CD14-positive monocyte (primary cell): ENCODE measurements at regions of chr19 and their contacts with region 1.

Region 1: GRCh38 chr19:19900729-19901444 is at the start of gene ZNF93:
- DNase-seq: peak; percentile 85 to 87 (median 86)
- H3K4me3 ChIP-seq: peak within 1 kb of the TSS; percentile 68 to 94 (median 88)
- H3K4me3 Mint-ChIP-seq: peak within 1 kb of the TSS; percentile 98 to 99
- H3K27ac ChIP-seq: peak within 1 kb of the TSS; percentile 82 to 86
- H3K27ac Mint-ChIP-seq: peak within 1 kb of the TSS; percentile 80 to 93 (median 90)
- H3K4me1 ChIP-seq: peaks cover 12 to 18% of the 10 kb centered on the region in 2 donors
- H3K4me1 Mint-ChIP-seq: peaks cover 12% of the 10 kb centered on the region
- H3K27me3 ChIP-seq: no peaks in the 10 kb centered on the region
- H3K27me3 Mint-ChIP-seq: peaks cover 0 to 2% (median 0%) of the 10 kb centered on the region in 3 donors
- CTCF ChIP-seq: no peak
- polyA plus RNA-seq, gene ZNF93: 2.4 to 4.6 (median 2.8) TPM

Region 2: GRCh38 chr19:19663256-19664038 is 237.4 kb before region 1 on chr19 and contains the start of gene ATP13A1:
- intact Hi-C with region 1: loop called in 1 of 2 experiments (anchors 10 kb)
- DNase-seq: peak; percentile 96 to 99 (median 97)
- H3K4me3 ChIP-seq: peak within 1 kb of the TSS; percentile 80 to 95 (median 93)
- H3K4me3 Mint-ChIP-seq: peak within 1 kb of the TSS; percentile 90 to 94
- H3K27ac ChIP-seq: peak within 1 kb of the TSS; percentile 96 to 99
- H3K27ac Mint-ChIP-seq: peak within 1 kb of the TSS; percentile 95 to 99 (median 98)
- H3K4me1 ChIP-seq: peaks cover 28 to 41% of the 10 kb centered on the region in 2 donors
- H3K4me1 Mint-ChIP-seq: peaks cover 32% of the 10 kb centered on the region
- H3K27me3 ChIP-seq: no peaks in the 10 kb centered on the region
- H3K27me3 Mint-ChIP-seq: peaks cover 0 to 4% (median 2%) of the 10 kb centered on the region in 3 donors
- CTCF ChIP-seq: peak; percentile 14
- polyA plus RNA-seq, gene ATP13A1: 16.9 to 106 (median 21.9) TPM

Region 3: DNA sequence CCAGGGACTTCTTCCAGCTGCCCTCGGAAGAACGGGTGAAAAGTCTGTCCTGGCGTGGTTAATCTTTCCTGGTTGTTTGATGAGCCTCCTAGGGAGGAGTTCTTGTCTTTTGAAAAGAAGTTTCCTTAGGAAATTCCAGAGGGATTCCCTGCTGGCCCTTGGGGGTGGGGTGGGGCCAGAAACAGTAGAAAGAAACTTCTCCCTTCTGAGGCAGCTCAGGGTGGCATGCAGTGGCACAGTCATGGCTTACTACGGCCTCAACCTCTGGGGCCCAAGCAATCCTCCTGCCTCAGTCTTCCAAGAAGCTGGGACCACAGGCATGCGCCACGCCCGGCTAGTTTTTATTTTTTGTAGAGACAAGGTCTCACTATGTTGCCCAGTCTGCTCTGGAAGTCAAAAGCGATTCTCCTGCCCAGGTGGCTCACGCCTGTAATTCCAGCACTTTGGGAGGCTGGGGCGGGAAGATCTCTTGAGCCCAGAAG is 230.8 kb before region 1 on chr19:
- intact Hi-C with region 1: loop called (anchors 10 kb)
- DNase-seq: no peak
- H3K4me3 ChIP-seq: peak overlapping the region in 1 of 3 experiments; percentile 97
- H3K4me3 Mint-ChIP-seq: peak overlapping the region in 1 of 2 donors; percentile 94
- H3K27ac ChIP-seq: no peak overlapping the region
- H3K27ac Mint-ChIP-seq: peak overlapping the region in 1 of 7 donors; percentile 40
- H3K4me1 ChIP-seq: peaks cover 13 to 22% of the 10 kb centered on the region in 2 donors
- H3K4me1 Mint-ChIP-seq: peaks cover 19% of the 10 kb centered on the region
- H3K27me3 ChIP-seq: no peaks in the 10 kb centered on the region
- H3K27me3 Mint-ChIP-seq: peaks cover 0 to 2% (median 0%) of the 10 kb centered on the region in 3 donors
- CTCF ChIP-seq: no peak

Region 4: GRCh38 chr19:19821366-19821951 is 79.4 kb before region 1 on chr19 and contains the start of gene ZNF506:
- intact Hi-C with region 1: loop called in 1 of 2 experiments (anchors 2 kb)
- DNase-seq: peak; percentile 90 to 93 (median 91)
- H3K4me3 ChIP-seq: peak within 1 kb of the TSS; percentile 61 to 87 (median 71)
- H3K4me3 Mint-ChIP-seq: peak within 1 kb of the TSS; percentile 99
- H3K27ac ChIP-seq: peak within 1 kb of the TSS; percentile 86 to 92
- H3K27ac Mint-ChIP-seq: peak within 1 kb of the TSS; percentile 95 to 99 (median 98)
- H3K4me1 ChIP-seq: peaks cover 0 to 8% of the 10 kb centered on the region in 2 donors
- H3K4me1 Mint-ChIP-seq: peaks cover 9% of the 10 kb centered on the region
- H3K27me3 ChIP-seq: no peaks in the 10 kb centered on the region
- H3K27me3 Mint-ChIP-seq: peaks cover 0 to 1% (median 0%) of the 10 kb centered on the region in 3 donors
- CTCF ChIP-seq: no peak
- polyA plus RNA-seq, gene ZNF506: 4.1 to 8.3 (median 6.1) TPM

Region 5: GRCh38 chr19:19865739-19866481 is 35.0 kb before region 1 on chr19 and contains the start of gene ZNF253:
- intact Hi-C with region 1: loop called in 1 of 2 experiments (anchors 2 kb)
- DNase-seq: peak; percentile 79 to 82 (median 80)
- H3K4me3 ChIP-seq: peak within 1 kb of the TSS; percentile 63 to 94 (median 73)
- H3K4me3 Mint-ChIP-seq: peak within 1 kb of the TSS; percentile 99
- H3K27ac ChIP-seq: peak within 1 kb of the TSS; percentile 87 to 95
- H3K27ac Mint-ChIP-seq: peak within 1 kb of the TSS; percentile 91 to 98 (median 96)
- H3K4me1 ChIP-seq: peaks cover 10% of the 10 kb centered on the region in 2 donors
- H3K4me1 Mint-ChIP-seq: peaks cover 25% of the 10 kb centered on the region
- H3K27me3 ChIP-seq: no peaks in the 10 kb centered on the region
- H3K27me3 Mint-ChIP-seq: peaks cover under 1 to 2% (median under 1%) of the 10 kb centered on the region in 3 donors
- CTCF ChIP-seq: no peak
- polyA plus RNA-seq, gene ZNF253: 0.45 to 1.5 (median 1.1) TPM

Region 6: GRCh38 chr19:19956434-19957075 is 55.7 kb after region 1 on chr19:
- intact Hi-C with region 1: no loop called
- DNase-seq: no peak
- H3K4me3 ChIP-seq: no peak overlapping the region
- H3K4me3 Mint-ChIP-seq: no peak overlapping the region
- H3K27ac ChIP-seq: no peak overlapping the region
- H3K27ac Mint-ChIP-seq: peak overlapping the region in 1 of 7 donors; percentile 2
- H3K4me1 ChIP-seq: no peaks in the 10 kb centered on the region
- H3K4me1 Mint-ChIP-seq: no peaks in the 10 kb centered on the region
- H3K27me3 ChIP-seq: no peaks in the 10 kb centered on the region
- H3K27me3 Mint-ChIP-seq: peaks cover 0 to 2% (median 0%) of the 10 kb centered on the region in 3 donors
- CTCF ChIP-seq: no peak